Gastrocnemius medialis (tissue), 4 donors: ENCODE measurements at regions of chrX and their contacts with region 1.

Region 1: GRCh38 chrX:140503714-140504351 is 1.0 kb downstream of the SOX3 start:
- DNase-seq: no peak
- ATAC-seq: peak; percentile 47 to 49
- H3K4me3 ChIP-seq: peak overlapping the region; percentile 21 to 36 (median 27)
- H3K27ac ChIP-seq: no peak overlapping the region
- H3K4me1 ChIP-seq: peaks cover 5 to 14% of the 10 kb centered on the region in 2 donors
- H3K27me3 ChIP-seq: peaks cover 54 to 80% (median 71%) of the 10 kb centered on the region in 3 donors
- CTCF ChIP-seq: no peak
- POLR2A ChIP-seq: no peak

Region 2: GRCh38 chrX:140389331-140389730 is 114.5 kb before region 1 on chrX:
- in situ Hi-C with region 1: no loop called
- intact Hi-C with region 1: no loop called
- DNase-seq: no peak
- ATAC-seq: no peak
- H3K4me3 ChIP-seq: no peak overlapping the region
- H3K27ac ChIP-seq: no peak overlapping the region
- H3K4me1 ChIP-seq: no peaks in the 10 kb centered on the region
- H3K27me3 ChIP-seq: no peaks in the 10 kb centered on the region
- CTCF ChIP-seq: no peak
- POLR2A ChIP-seq: no peak

Region 3: GRCh38 chrX:140439476-140439875 is 64.4 kb before region 1 on chrX:
- in situ Hi-C with region 1: no loop called
- intact Hi-C with region 1: loop called (anchors 10 kb)
- DNase-seq: no peak
- ATAC-seq: no peak
- H3K4me3 ChIP-seq: no peak overlapping the region
- H3K27ac ChIP-seq: no peak overlapping the region
- H3K4me1 ChIP-seq: no peaks in the 10 kb centered on the region
- H3K27me3 ChIP-seq: peaks cover 0 to 9% (median 3%) of the 10 kb centered on the region in 3 donors
- CTCF ChIP-seq: no peak
- POLR2A ChIP-seq: no peak